OCI-LY7 (cell line): ENCODE measurements at regions of chr4 and their contacts with region 1.

Region 1: DNA sequence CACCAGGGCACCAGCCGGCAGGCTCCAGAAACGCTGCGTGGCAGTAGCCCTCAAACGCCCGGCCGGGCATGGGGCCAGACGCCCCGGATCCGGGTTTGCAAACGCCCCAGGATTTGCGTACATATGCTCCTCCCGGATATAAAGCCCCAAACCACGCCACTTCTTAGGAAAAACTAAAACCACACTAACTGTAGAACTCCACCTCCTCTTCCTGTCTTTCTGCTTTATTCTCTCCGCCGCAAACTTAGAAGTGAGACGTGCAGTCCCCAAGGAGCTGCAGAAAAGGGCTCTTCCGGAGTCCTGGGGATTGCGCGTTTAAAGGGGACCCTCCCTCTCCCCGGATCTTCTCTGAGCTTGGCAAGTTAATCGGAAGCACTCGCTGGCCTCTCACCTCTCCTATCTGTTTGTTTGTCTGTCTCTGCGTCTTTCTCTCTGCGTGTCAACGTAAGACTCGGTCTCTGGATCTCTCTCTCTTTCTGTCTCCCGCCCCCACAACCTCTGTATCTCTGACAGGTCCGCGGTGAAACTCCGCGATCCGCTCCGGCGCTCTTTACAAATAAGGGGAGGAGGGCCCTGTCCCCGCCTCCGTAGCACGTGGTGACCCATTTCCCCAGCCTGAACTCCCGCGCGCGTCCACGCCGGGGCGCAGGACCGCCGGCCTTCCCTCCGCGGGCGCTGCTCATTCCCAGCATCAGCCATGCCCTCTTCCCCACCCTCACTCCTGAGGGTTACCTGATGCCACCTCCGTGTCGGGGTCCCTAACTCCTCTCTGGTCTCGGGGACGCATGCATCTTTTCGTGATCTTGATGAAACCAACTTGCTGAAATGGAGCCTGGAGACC is at the start of gene SLC39A8:
- DNase-seq: peak; percentile 93
- H3K4me3 ChIP-seq: peak within 1 kb of the TSS; percentile 78
- H3K27ac ChIP-seq: peak within 1 kb of the TSS; percentile 94
- H3K4me1 ChIP-seq: peaks cover 42% of the 10 kb centered on the region
- CTCF ChIP-seq: peak; percentile 84
- total RNA-seq, gene SLC39A8: 29.2 and 35.4 TPM in 2 replicates

Region 2: DNA sequence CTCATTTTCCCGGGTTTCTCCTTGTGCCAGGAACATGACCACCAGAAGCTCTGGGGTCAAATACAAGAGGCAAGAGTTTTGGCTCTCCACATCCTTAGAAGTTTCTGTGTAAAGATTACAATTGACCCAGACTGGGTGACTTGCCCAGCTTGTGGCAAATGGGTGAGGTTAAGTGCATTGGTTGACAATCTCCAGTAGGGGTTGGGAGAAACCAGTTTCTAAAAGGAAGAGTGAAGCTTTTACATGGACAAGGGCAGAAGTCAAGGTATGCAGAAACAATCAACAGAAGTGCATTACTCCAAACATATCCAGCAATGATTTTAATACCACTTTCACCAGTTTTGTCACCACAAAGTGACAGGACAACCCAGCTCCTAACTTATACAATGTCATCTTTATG is 89.7 kb before region 1 on chr4:
- CTCF ChIA-PET with region 1: no interaction called
- POLR2A ChIA-PET with region 1: no interaction called
- intact Hi-C with region 1: loop called (anchors 5 kb)
- DNase-seq: no peak
- H3K4me3 ChIP-seq: no peak overlapping the region
- H3K27ac ChIP-seq: no peak overlapping the region
- H3K4me1 ChIP-seq: no peaks in the 10 kb centered on the region
- CTCF ChIP-seq: no peak

Region 3: GRCh38 chr4:102430461-102430910 is 85.3 kb after region 1 on chr4:
- CTCF ChIA-PET with region 1: no interaction called
- POLR2A ChIA-PET with region 1: interaction called, 13 read pairs
- intact Hi-C with region 1: loop called (anchors 1 kb)
- DNase-seq: no peak
- H3K4me3 ChIP-seq: peak overlapping the region; percentile 69
- H3K27ac ChIP-seq: peak overlapping the region; percentile 48
- H3K4me1 ChIP-seq: peaks cover 6% of the 10 kb centered on the region
- CTCF ChIP-seq: no peak

Region 4: GRCh38 chr4:102868781-102869568 is 523.8 kb after region 1 on chr4 and contains the start of gene CISD2:
- CTCF ChIA-PET with region 1: no interaction called
- POLR2A ChIA-PET with region 1: interaction called, 4 read pairs
- intact Hi-C with region 1: loop called (anchors 5 kb)
- DNase-seq: peak; percentile 94
- H3K4me3 ChIP-seq: peak within 1 kb of the TSS; percentile 74
- H3K27ac ChIP-seq: peak within 1 kb of the TSS; percentile 94
- H3K4me1 ChIP-seq: peaks cover 42% of the 10 kb centered on the region
- CTCF ChIP-seq: no peak
- total RNA-seq, gene CISD2: 37.6 and 41.1 TPM in 2 replicates

Region 5: GRCh38 chr4:103099691-103100392 is 754.7 kb after region 1 on chr4 and contains the start of gene BDH2:
- CTCF ChIA-PET with region 1: no interaction called
- POLR2A ChIA-PET with region 1: no interaction called
- intact Hi-C with region 1: loop called (anchors 5 kb)
- DNase-seq: peak; percentile 94
- H3K4me3 ChIP-seq: peak within 1 kb of the TSS; percentile 69
- H3K27ac ChIP-seq: no peak within 1 kb of the TSS
- H3K4me1 ChIP-seq: peaks cover 8% of the 10 kb centered on the region
- CTCF ChIP-seq: peak; percentile 90
- total RNA-seq, gene BDH2: 28.2 and 35.2 TPM in 2 replicates